Natural killer cell (primary cell): ENCODE measurements at regions of chr17 and their contacts with region 1.

Region 1: DNA sequence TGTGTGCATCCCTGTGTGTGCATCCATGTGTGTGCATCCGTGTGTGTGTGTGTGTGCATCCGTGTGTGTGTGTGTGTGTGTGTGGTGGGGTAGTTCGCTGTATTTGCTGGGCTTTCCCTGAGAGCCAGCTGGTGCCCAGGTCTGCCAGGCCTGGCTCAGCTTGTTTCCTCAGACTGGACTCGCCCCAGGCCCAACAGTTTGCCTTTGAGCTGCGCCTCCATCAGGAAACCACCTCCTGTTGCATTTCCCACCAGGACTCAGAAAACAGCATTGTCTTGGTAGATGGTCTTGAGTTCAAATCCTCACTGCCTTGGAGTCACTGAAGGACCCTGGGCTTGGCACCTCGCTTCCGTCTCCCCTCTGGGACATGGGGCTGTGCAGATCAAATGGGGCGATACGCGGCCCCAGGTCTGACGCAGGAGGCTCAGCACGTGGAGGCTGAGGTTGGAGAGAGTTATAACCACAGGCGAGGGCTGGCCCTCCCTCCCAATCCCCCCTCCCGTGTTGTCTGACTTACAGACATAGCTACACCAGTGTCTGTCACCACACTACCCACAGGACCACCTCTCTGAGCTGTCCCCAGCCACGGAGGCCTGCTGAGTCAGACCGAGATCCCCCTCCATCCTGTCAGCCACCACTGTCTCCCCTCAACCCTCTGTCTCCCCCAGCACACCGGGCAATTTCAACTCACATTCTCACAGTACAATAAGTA is 4.7 kb downstream of the ITGAE start:
- DNase-seq: peak; percentile 83 to 91
- ATAC-seq: peak; percentile 66 to 88 (median 81)
- H3K4me3 ChIP-seq: no peak overlapping the region
- H3K4me3 Mint-ChIP-seq: peak overlapping the region; percentile 77
- H3K27ac ChIP-seq: peak overlapping the region; percentile 24
- H3K27ac Mint-ChIP-seq: peak overlapping the region; percentile 84 to 89
- H3K4me1 ChIP-seq: peaks cover 68% of the 10 kb centered on the region
- H3K4me1 Mint-ChIP-seq: peaks cover 45 to 54% of the 10 kb centered on the region in 2 donors
- H3K27me3 ChIP-seq: no peaks in the 10 kb centered on the region
- H3K27me3 Mint-ChIP-seq: peaks cover 0 to 12% of the 10 kb centered on the region in 2 donors
- CTCF ChIP-seq: no peak

Region 2: GRCh38 chr17:3695723-3696411 is 100.4 kb before region 1 on chr17 and contains the start of gene P2RX5:
- intact Hi-C with region 1: loop called (anchors 1 kb)
- DNase-seq: peak; percentile 29 to 63
- ATAC-seq: peak; percentile 46 to 61 (median 52)
- H3K4me3 ChIP-seq: peak within 1 kb of the TSS; percentile 60
- H3K4me3 Mint-ChIP-seq: peak within 1 kb of the TSS; percentile 80
- H3K27ac ChIP-seq: peak within 1 kb of the TSS; percentile 52
- H3K27ac Mint-ChIP-seq: peak within 1 kb of the TSS in 1 of 2 donors; percentile 79
- H3K4me1 ChIP-seq: peaks cover 52% of the 10 kb centered on the region
- H3K4me1 Mint-ChIP-seq: peaks cover 12 to 36% of the 10 kb centered on the region in 2 donors
- H3K27me3 ChIP-seq: peaks cover 3% of the 10 kb centered on the region
- H3K27me3 Mint-ChIP-seq: peaks cover 0 to 5% of the 10 kb centered on the region in 2 donors
- CTCF ChIP-seq: no peak
- total RNA-seq, gene P2RX5: 7.8 to 15.4 (median 9.2) TPM

Region 3: DNA sequence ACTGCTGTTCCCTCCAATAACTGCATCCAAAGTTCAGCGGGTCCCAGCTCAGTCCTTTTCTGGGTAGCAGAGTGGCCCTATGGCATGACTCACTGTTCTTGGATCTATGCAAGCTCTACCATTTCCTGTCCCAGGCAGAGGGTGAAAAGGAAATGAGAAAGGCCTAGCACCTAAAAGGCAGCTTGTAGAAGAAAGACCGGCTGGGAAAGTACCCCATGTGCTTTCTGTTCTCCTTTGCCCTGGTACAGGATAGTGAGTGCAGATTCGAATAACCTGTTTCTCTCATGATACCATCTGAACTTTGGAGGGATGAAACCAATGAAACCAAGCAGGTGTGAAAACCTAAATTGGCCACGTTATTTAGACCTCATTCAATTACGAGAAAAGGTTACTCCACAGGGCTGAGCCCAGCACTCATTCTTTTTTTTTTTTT is 85.3 kb before region 1 on chr17:
- intact Hi-C with region 1: loop called (anchors 2 kb)
- DNase-seq: peak in 1 of 2 donors; percentile 94
- ATAC-seq: peak; percentile 93 to 95 (median 93)
- H3K4me3 ChIP-seq: no peak overlapping the region
- H3K4me3 Mint-ChIP-seq: peak overlapping the region; percentile 67
- H3K27ac ChIP-seq: peak overlapping the region; percentile 44
- H3K27ac Mint-ChIP-seq: peak overlapping the region; percentile 71 to 77
- H3K4me1 ChIP-seq: peaks cover 33% of the 10 kb centered on the region
- H3K4me1 Mint-ChIP-seq: peaks cover 25 to 36% of the 10 kb centered on the region in 2 donors
- H3K27me3 ChIP-seq: no peaks in the 10 kb centered on the region
- H3K27me3 Mint-ChIP-seq: no peaks in the 10 kb centered on the region
- CTCF ChIP-seq: no peak

Region 4: DNA sequence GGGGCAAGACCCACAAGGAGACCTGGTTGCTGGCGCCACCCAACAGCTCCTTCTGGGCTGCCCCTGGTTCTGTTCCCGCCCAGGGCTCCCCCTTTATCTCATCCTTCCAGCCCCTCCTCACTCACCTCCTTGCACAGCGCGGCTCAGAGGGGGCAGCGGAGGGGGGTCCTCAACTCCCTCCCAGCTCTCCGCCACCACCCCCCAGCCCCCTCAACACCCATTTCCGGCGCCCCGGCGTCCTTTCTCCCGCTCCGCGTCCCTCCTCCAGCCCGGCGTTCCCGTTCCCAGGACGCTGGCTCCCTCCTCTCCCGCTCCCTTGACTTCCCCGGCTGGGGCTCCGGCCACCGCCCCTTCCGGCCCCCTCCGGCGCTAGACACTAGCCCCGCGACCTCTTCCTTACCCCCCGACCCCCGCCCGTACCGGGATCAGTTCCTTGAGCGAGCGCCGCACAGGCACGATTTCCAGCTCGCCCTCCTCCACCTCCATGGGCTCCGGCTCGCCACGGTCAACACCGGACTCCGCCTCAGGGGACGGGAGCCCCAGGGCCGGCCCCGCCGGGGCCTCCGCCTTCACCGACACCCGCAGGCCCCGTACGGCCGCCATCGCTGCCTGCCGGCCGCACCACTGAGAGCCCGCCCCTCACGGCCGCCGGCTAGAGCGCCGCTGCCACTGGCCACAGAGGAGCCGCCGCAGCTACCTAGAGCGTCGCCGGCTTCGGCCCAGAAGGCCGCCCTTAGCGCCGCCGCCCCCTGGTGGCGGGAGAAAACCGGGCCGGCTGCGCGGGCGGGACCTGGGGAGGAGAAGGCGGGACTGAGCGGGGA is 49.6 kb after region 1 on chr17 and contains the start of gene NCBP3:
- intact Hi-C with region 1: loop called (anchors 5 kb)
- DNase-seq: peak; percentile 90 to 96
- ATAC-seq: peak; percentile 88 to 99 (median 95)
- H3K4me3 ChIP-seq: peak within 1 kb of the TSS; percentile 96
- H3K4me3 Mint-ChIP-seq: peak within 1 kb of the TSS; percentile 92
- H3K27ac ChIP-seq: peak within 1 kb of the TSS; percentile 82
- H3K27ac Mint-ChIP-seq: peak within 1 kb of the TSS; percentile 83 to 86
- H3K4me1 ChIP-seq: peaks cover 18% of the 10 kb centered on the region
- H3K4me1 Mint-ChIP-seq: peaks cover 18 to 36% of the 10 kb centered on the region in 2 donors
- H3K27me3 ChIP-seq: no peaks in the 10 kb centered on the region
- H3K27me3 Mint-ChIP-seq: peaks cover 0 to 3% of the 10 kb centered on the region in 2 donors
- CTCF ChIP-seq: peak; percentile 84
- total RNA-seq, gene NCBP3: 55.9 to 60.7 (median 58.1) TPM

Region 5: DNA sequence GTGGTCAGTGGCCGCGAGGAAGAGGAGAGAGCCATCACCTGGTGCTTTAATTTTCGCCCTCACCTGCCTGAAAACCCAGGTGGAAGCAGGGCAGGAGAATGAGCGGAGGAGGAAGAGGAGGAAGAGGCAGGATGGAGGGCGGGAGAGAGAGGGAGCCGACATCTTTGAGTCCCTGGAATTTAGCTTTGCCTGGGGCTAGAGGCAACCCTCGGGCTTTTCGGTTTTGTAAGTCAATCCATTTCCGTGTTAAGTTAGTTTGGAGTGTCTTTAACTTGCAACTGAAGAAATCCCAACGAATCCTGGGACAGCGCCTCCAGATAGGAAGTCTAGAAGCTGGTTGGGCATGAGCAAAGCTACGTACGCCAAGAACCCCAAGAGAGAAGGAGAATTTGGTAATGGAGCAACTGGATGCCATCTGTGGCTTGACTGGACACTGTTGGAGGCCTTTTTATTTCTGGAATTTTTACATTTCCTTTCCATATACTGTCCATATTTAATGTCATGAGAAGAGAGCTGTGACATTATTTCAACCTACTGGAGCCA is 204.9 kb after region 1 on chr17:
- intact Hi-C with region 1: no loop called
- DNase-seq: no peak
- ATAC-seq: no peak
- H3K4me3 ChIP-seq: no peak overlapping the region
- H3K4me3 Mint-ChIP-seq: no peak overlapping the region
- H3K27ac ChIP-seq: no peak overlapping the region
- H3K27ac Mint-ChIP-seq: no peak overlapping the region
- H3K4me1 ChIP-seq: peaks cover 10% of the 10 kb centered on the region
- H3K4me1 Mint-ChIP-seq: peaks cover 0 to 12% of the 10 kb centered on the region in 2 donors
- H3K27me3 ChIP-seq: no peaks in the 10 kb centered on the region
- H3K27me3 Mint-ChIP-seq: peaks cover 7 to 11% of the 10 kb centered on the region in 2 donors
- CTCF ChIP-seq: no peak